ENCODE measurements at regions of chr11 and their contacts with region 1.

Region 1: GRCh38 chr11:15074206-15075161 is 1.1 kb downstream of the CALCB start:
- DNase-seq: peak; percentile 92
- H3K4me3 Mint-ChIP-seq: peak overlapping the region; percentile 78
- H3K27ac Mint-ChIP-seq: peak overlapping the region; percentile 26
- H3K4me1 Mint-ChIP-seq: peaks cover 17% of the 10 kb centered on the region
- H3K27me3 Mint-ChIP-seq: peaks cover 10% of the 10 kb centered on the region

Region 2: GRCh38 chr11:14374922-14375830 is 699.3 kb before region 1 on chr11:
- CTCF ChIA-PET with region 1: no interaction called
- POLR2A ChIA-PET with region 1: no interaction called
- intact Hi-C with region 1: loop called (anchors 1 kb)
- DNase-seq: peak; percentile 33
- H3K4me3 Mint-ChIP-seq: no peak overlapping the region
- H3K27ac Mint-ChIP-seq: peak overlapping the region; percentile 59
- H3K4me1 Mint-ChIP-seq: peaks cover 38% of the 10 kb centered on the region
- H3K27me3 Mint-ChIP-seq: peaks cover 8% of the 10 kb centered on the region

Region 3: DNA sequence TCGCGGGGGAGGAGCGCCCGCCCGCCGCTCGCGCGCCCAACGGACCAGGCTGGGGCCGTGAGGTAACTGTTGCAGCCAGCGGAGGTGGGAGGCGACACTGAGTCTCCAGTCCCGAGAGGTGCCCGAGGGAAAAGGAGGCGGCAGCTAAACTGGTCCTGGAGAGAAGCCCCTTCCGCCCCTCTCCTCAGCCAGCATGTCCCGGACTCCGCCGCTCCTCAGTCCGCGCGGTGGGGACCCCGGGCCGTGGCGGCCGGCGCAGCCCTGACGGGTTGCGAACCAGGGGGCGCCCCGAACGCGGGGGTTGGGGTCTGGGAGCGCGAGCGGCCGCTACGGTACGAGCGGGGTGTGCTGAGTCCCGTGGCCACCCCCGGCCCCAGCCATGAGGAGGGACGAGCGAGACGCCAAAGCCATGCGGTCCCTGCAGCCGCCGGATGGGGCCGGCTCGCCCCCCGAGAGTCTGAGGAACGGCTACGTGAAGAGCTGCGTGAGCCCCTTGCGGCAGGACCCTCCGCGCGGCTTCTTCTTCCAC is 430.7 kb before region 1 on chr11 and contains the start of gene PDE3B:
- CTCF ChIA-PET with region 1: no interaction called
- POLR2A ChIA-PET with region 1: no interaction called
- intact Hi-C with region 1: loop called (anchors 10 kb)
- DNase-seq: peak; percentile 87
- H3K4me3 Mint-ChIP-seq: peak within 1 kb of the TSS; percentile 71
- H3K27ac Mint-ChIP-seq: peak within 1 kb of the TSS; percentile 89
- H3K4me1 Mint-ChIP-seq: peaks cover 49% of the 10 kb centered on the region
- H3K27me3 Mint-ChIP-seq: no peaks in the 10 kb centered on the region
- total RNA-seq, gene PDE3B: 21.6 to 21.8 TPM

Region 4: DNA sequence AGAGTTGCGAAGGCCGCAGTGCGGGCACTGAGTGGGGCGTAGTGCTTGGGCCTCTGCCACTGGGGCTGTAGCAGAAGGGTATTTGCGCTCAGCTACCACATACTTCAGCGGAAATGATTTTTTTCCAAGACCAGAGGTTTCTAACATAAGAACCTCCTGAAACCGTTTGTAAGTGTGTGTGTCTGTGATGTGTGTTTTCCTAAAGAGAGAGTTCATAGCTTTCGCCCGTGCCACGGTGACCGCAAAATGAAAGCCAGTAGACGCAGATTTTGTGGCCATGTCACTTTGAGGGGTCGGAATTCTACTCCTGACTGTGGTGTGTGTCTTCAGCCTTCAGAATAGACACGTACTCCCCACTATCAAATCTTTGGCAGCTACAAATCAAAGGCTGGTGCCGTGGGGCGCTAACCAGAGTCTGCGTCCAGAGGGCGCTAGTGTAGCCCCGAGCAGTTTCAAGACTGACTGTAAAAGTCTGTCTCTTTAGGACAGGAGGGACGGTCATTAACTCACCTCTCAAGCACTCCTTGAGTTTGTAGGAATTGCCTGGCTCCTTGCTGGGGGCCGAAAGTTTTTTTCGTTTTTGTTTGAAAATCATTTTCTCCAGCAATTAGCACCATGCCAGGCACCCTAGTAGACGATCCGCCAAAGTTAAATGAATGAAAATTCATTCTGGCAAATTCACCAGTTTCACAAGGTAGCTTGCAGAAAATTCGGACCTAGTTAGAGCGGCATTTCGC is 99.8 kb before region 1 on chr11:
- CTCF ChIA-PET with region 1: interaction called, 105 read pairs
- POLR2A ChIA-PET with region 1: interaction called, 9 read pairs
- intact Hi-C with region 1: loop called (anchors 1 kb)
- DNase-seq: peak; percentile 83
- H3K4me3 Mint-ChIP-seq: peak overlapping the region; percentile 62
- H3K27ac Mint-ChIP-seq: no peak overlapping the region
- H3K4me1 Mint-ChIP-seq: peaks cover 26% of the 10 kb centered on the region
- H3K27me3 Mint-ChIP-seq: peaks cover 61% of the 10 kb centered on the region

Region 5: GRCh38 chr11:15038963-15039362 is 35.5 kb before region 1 on chr11:
- CTCF ChIA-PET with region 1: interaction called, 15 read pairs
- POLR2A ChIA-PET with region 1: no interaction called
- intact Hi-C with region 1: loop called (anchors 1 kb)
- DNase-seq: no peak
- H3K4me3 Mint-ChIP-seq: no peak overlapping the region
- H3K27ac Mint-ChIP-seq: no peak overlapping the region
- H3K4me1 Mint-ChIP-seq: no peaks in the 10 kb centered on the region
- H3K27me3 Mint-ChIP-seq: peaks cover 7% of the 10 kb centered on the region

Region 6: DNA sequence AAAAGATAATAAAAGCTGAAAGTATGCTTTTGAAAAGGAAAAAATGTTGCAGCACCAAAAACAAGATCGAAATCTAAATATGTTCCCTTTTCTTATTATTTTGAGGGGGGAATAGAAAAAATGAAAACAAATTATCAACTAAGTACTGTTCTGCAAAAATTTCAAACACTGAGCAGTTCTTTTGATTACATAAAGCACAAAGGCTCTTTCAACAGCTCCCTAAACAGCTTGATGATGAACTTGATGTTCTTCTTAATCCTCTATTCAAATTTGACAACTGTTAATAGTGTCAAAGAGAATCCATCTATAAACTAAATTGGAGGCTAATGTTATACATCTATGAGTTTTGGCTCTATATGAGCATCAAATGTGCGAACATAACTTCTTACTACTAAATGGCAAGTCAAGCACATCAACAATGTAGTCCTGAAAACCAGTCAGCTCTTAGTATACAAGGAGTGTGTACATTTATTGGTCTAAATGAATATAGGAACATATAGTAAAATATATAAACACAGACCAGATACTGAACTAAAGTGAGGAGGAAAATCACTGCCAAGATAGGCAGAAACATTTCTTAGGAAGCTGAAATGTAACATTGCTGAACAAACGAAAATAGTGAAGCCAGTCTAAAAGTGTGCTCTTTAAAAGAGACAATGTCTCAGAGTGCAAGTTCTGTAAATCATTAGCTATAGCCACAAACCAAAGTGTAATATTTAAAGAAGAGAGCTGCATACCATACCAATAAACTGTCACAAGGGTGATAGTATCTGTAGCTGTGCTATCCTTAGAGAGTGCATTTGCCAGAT is 1187.6 kb after region 1 on chr11:
- CTCF ChIA-PET with region 1: no interaction called
- POLR2A ChIA-PET with region 1: no interaction called
- intact Hi-C with region 1: no loop called
- DNase-seq: no peak
- H3K4me3 Mint-ChIP-seq: no peak overlapping the region
- H3K27ac Mint-ChIP-seq: no peak overlapping the region
- H3K4me1 Mint-ChIP-seq: no peaks in the 10 kb centered on the region
- H3K27me3 Mint-ChIP-seq: no peaks in the 10 kb centered on the region